Activated CD4-positive, alpha-beta memory T cell treated with anti-CD3 and anti-CD28 coated beads for 36 hours (primary cell): ENCODE measurements at regions of chr1 and their contacts with region 1.

Region 1: GRCh38 chr1:151254217-151255213 is at the start of gene PSMD4:
- DNase-seq: peak; percentile 97
- H3K4me3 Mint-ChIP-seq: peak within 1 kb of the TSS; percentile 92
- H3K27ac Mint-ChIP-seq: peak within 1 kb of the TSS; percentile 81
- H3K4me1 Mint-ChIP-seq: peaks cover 25% of the 10 kb centered on the region
- H3K27me3 Mint-ChIP-seq: peaks cover 2% of the 10 kb centered on the region
- total RNA-seq, gene PSMD4: 212 to 227 TPM

Region 2: DNA sequence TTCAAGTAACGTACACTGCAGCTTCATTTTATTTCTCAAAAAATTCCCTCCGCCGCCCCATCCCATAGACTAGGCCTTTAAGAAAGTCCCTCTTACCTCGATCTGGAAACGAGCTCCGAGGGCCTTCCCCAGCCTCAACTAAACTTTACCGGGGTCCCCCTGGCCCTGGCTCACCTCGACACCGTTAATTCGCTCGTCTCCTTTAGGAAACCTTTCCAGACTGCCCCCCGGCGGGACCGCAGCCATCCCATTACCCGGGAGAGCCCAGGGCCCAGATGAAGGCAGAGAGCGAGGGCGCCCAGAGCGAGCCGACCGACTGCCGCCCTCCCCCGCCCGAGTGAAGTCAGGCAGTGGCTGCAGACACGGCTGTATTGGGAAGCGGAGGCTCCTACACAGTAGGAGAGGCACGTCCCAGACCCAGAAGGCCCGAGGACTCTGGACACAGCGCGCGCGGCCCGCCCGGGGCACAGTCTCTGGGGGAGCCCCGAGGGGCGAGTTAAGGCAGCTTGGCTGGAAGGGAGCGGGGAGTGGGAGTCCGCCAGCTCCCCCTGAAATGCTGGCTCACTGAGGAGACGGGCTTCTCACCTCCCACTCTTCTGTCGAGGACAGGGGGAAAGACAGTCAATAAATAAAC is 122.7 kb before region 1 on chr1:
- CTCF ChIA-PET with region 1: no interaction called
- POLR2A ChIA-PET with region 1: no interaction called
- intact Hi-C with region 1: no loop called
- DNase-seq: no peak
- H3K4me3 Mint-ChIP-seq: peak overlapping the region; percentile 72
- H3K27ac Mint-ChIP-seq: no peak overlapping the region
- H3K4me1 Mint-ChIP-seq: peaks cover 13% of the 10 kb centered on the region
- H3K27me3 Mint-ChIP-seq: peaks cover 4% of the 10 kb centered on the region

Region 3: GRCh38 chr1:151165738-151166505 is 88.6 kb before region 1 on chr1 and contains the starts of genes LYSMD1 and SCNM1:
- CTCF ChIA-PET with region 1: interaction called, 7 read pairs
- POLR2A ChIA-PET with region 1: no interaction called
- intact Hi-C with region 1: loop called (anchors 2 kb)
- DNase-seq: peak; percentile 99
- H3K4me3 Mint-ChIP-seq: peak within 1 kb of the TSS; percentile 92
- H3K27ac Mint-ChIP-seq: peak within 1 kb of the TSS; percentile 92
- H3K4me1 Mint-ChIP-seq: peaks cover 49% of the 10 kb centered on the region
- H3K27me3 Mint-ChIP-seq: peaks cover 2% of the 10 kb centered on the region
- total RNA-seq, gene LYSMD1: 1.8 to 2.6 TPM
- total RNA-seq, gene SCNM1: 67.5 to 67.8 TPM

Region 4: DNA sequence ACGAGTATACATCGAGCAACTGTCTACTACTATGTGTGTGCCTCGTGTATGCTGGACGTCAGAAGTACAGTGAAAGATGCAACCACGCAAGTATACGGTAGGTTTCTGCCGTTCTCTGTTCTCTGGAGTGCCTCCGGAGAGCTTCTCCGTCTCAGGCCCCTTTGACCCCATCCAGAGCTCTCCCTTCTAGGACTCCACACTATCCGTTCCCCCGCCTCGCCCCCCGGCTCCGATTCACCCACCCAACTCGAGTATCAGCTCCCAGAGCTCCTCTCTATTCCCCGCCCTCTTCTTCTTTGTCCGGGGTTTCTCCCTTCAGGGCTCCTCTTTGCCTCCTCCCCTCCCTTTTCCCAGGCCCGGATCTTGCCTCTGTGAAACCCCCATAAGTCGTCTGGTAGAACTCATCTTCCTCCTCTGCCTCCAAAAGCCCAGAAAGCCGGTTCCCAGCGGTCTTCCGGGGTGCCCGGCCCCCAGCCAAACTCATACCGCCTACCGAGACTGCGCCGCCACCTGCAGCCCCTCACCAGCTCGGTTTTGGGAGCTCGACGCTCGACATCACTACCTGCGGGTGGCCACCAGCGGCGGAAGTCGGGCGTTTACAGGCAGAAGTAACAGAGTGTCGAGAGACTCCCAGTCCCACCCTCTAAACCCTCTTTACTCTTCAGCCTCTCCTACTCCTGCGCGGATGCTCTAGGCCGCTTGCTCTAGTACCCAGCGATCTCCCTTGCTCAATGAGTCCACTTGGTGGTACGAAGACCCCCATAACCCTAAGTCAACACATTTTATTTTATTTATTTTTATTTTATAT is 64.7 kb before region 1 on chr1 and contains the start of gene VPS72:
- CTCF ChIA-PET with region 1: interaction called, 32 read pairs
- POLR2A ChIA-PET with region 1: interaction called, 7 read pairs
- intact Hi-C with region 1: no loop called
- DNase-seq: peak; percentile 93
- H3K4me3 Mint-ChIP-seq: peak within 1 kb of the TSS; percentile 97
- H3K27ac Mint-ChIP-seq: peak within 1 kb of the TSS; percentile 94
- H3K4me1 Mint-ChIP-seq: peaks cover 22% of the 10 kb centered on the region
- H3K27me3 Mint-ChIP-seq: no peaks in the 10 kb centered on the region
- total RNA-seq, gene VPS72: 77.6 to 80.4 TPM

Region 5: GRCh38 chr1:151227634-151228033 is 26.9 kb before region 1 on chr1:
- CTCF ChIA-PET with region 1: interaction called, 15 read pairs
- POLR2A ChIA-PET with region 1: no interaction called
- intact Hi-C with region 1: no loop called
- DNase-seq: no peak
- H3K4me3 Mint-ChIP-seq: no peak overlapping the region
- H3K27ac Mint-ChIP-seq: no peak overlapping the region
- H3K4me1 Mint-ChIP-seq: no peaks in the 10 kb centered on the region
- H3K27me3 Mint-ChIP-seq: no peaks in the 10 kb centered on the region

Region 6: GRCh38 chr1:151237678-151238466 is 16.6 kb before region 1 on chr1:
- CTCF ChIA-PET with region 1: interaction called, 20 read pairs
- POLR2A ChIA-PET with region 1: interaction called, 3 read pairs
- intact Hi-C with region 1: no loop called
- DNase-seq: no peak
- H3K4me3 Mint-ChIP-seq: no peak overlapping the region
- H3K27ac Mint-ChIP-seq: no peak overlapping the region
- H3K4me1 Mint-ChIP-seq: peaks cover 2% of the 10 kb centered on the region
- H3K27me3 Mint-ChIP-seq: no peaks in the 10 kb centered on the region

Region 7: DNA sequence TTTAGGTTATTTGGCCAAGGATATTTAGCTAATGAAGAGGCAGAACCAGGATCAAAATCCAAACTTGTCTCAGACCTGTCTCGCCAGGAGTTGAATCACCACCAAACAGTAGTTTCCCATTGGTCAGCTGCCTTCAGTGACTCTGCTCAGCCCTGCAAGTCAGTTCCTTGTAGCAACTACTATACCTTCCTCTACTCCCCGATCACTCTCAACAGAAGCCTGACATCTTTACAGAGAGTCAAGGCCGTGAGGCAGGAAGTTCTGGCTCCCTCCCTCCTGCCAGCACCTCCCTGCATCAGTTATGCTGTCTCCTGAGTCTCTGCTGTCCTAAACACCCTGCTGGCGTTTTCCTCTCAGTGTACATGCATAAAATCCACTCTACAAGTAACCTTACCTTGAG is 13.2 kb after region 1 on chr1:
- CTCF ChIA-PET with region 1: interaction called, 10 read pairs
- POLR2A ChIA-PET with region 1: interaction called, 3 read pairs
- intact Hi-C with region 1: no loop called
- DNase-seq: no peak
- H3K4me3 Mint-ChIP-seq: no peak overlapping the region
- H3K27ac Mint-ChIP-seq: no peak overlapping the region
- H3K4me1 Mint-ChIP-seq: no peaks in the 10 kb centered on the region
- H3K27me3 Mint-ChIP-seq: no peaks in the 10 kb centered on the region

Region 8: GRCh38 chr1:151340870-151341754 is 86.6 kb after region 1 on chr1:
- CTCF ChIA-PET with region 1: interaction called, 12 read pairs
- POLR2A ChIA-PET with region 1: no interaction called
- intact Hi-C with region 1: no loop called
- DNase-seq: peak; percentile 63
- H3K4me3 Mint-ChIP-seq: no peak overlapping the region
- H3K27ac Mint-ChIP-seq: peak overlapping the region; percentile 29
- H3K4me1 Mint-ChIP-seq: peaks cover 25% of the 10 kb centered on the region
- H3K27me3 Mint-ChIP-seq: no peaks in the 10 kb centered on the region

Region 9: GRCh38 chr1:151356696-151357095 is 102.2 kb after region 1 on chr1:
- CTCF ChIA-PET with region 1: no interaction called
- POLR2A ChIA-PET with region 1: no interaction called
- intact Hi-C with region 1: no loop called
- DNase-seq: no peak
- H3K4me3 Mint-ChIP-seq: no peak overlapping the region
- H3K27ac Mint-ChIP-seq: no peak overlapping the region
- H3K4me1 Mint-ChIP-seq: no peaks in the 10 kb centered on the region
- H3K27me3 Mint-ChIP-seq: no peaks in the 10 kb centered on the region